ENCODE measurements at regions of chr12 and their contacts with region 1.

Region 1: DNA sequence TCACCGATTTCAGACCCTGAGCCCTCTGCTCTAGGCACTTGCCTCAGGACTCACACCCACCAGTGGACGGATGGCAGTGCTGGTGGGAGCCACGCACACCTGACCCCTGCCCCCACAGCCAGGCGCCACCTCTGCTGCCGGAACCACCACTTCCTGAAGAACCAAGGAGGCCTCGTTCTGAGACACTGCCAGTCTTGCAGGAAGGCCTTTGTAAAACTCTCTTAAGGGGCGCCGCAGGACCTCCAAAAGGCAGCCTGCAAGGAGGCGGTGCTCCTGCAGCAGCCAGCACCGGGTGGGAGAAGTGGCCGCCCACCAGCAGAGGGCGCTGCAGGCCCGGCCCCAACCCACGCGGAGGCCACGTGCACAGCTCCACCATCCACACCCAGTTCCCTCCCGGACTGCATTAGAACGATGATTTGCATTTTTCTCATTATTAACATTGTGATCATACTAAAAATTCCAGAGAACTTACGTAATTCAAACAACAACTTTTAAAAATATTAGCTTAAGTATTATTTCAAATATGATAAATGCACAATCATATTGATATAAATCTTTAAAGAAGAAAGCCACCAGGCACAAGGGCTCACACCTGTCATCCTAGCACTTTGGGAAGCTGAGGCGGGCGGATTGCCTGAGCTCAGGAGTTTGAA is 12.8 kb downstream of the STX2 start:
- DNase-seq: peak; percentile 67 to 96
- H3K4me3 ChIP-seq: no peak overlapping the region
- H3K27ac ChIP-seq: no peak overlapping the region
- H3K4me1 ChIP-seq: peaks cover 0 to 16% (median 12%) of the 10 kb centered on the region in 4 experiments; a peak in 6 of 7 replicates
- H3K27me3 ChIP-seq: no peaks in the 10 kb centered on the region
- CTCF ChIP-seq: peak; percentile 95 to 99 (median 96)
- EP300 ChIP-seq: no peak
- POLR2A ChIP-seq: no peak
- RAD21 ChIP-seq: peak; percentile 83 to 85

Region 2: GRCh38 chr12:130661486-130662255 is 164.6 kb before region 1 on chr12:
- CTCF ChIA-PET with region 1: no interaction called
- POLR2A ChIA-PET with region 1: no interaction called
- DNase-seq: no peak
- H3K4me3 ChIP-seq: no peak overlapping the region
- H3K27ac ChIP-seq: no peak overlapping the region
- H3K4me1 ChIP-seq: no peaks in the 10 kb centered on the region; a peak in 1 of 7 replicates
- H3K27me3 ChIP-seq: no peaks in the 10 kb centered on the region; a peak in 1 of 7 replicates
- CTCF ChIP-seq: peak in 2 of 3 experiments; percentile 26 to 31; a peak in 3 of 4 replicates
- EP300 ChIP-seq: no peak
- POLR2A ChIP-seq: no peak
- RAD21 ChIP-seq: peak; percentile 42 to 51; a peak in 3 of 4 replicates

Region 3: DNA sequence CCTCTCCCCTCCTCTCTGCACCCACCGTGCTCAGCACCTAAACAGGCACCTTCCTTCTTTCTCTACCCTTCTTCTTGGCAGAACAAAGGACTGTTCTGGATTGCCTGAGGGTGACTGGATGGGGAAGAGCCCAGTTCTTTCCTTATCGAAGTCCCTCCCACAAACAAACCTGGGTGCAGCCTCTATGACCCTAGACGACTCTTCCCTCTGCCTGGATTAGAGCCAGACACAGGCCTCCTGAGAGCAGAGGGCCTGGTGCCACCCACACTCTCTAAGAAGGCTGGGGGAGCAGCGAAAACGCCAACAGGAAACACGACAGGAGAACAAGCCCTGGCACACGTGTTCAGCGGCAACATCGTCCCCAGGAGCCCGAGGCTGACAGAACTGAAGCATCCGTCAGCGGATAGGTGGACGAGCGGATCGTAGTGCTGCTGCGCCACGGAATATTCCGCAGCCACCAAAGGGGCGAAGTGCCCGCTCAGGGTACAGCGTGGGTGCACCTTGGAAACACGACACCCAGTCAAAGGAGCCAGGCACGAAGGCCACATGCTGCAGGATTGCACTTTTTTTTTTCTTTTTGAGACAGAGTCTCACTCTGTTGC is 148.2 kb before region 1 on chr12:
- CTCF ChIA-PET with region 1: no interaction called
- POLR2A ChIA-PET with region 1: no interaction called
- DNase-seq: no peak
- H3K4me3 ChIP-seq: no peak overlapping the region
- H3K27ac ChIP-seq: no peak overlapping the region
- H3K4me1 ChIP-seq: no peaks in the 10 kb centered on the region
- H3K27me3 ChIP-seq: no peaks in the 10 kb centered on the region; a peak in 1 of 7 replicates
- CTCF ChIP-seq: no peak
- EP300 ChIP-seq: no peak
- POLR2A ChIP-seq: no peak
- RAD21 ChIP-seq: no peak

Region 4: DNA sequence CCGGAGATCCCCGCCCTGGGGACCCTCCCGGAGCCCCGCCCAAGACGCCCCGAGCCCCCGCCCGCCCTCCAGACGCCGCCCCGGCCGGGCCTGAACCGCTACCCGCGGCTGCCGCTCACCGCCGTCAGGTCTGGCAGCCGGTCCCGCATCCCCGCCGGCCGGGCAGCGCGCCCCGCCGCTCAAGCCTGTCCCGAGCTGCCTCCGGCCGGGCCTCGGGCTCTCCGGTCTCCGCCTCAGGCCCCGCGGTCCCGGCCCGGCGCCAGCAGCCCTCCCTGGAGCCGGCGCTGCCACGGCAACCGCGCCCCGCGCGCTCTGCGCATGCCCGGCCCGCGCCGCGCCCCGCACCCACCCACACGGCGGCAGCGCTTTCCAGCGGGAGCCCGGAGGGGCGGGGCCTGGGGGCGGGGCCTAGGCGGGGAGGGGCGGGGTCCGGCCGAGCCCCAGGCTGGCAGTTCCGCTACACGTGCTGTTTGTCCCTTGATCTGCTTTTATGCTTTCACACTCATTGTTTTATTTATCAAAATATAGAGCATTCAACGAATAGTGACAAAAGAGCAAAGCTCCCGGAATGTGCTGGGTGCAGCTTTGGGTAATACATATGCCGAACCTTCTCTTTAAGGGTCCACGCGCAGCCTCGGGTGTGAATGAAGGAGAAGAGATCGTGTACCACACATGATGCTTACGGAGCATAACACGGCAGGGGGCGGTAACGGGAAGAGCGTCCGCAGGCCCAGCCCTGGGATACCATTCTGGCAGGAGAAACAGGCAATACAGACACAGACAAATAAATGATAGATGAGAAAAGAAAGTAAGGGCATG is 12.9 kb after region 1 on chr12 and contains the start of gene STX2:
- CTCF ChIA-PET with region 1: interaction called, 70 read pairs
- POLR2A ChIA-PET with region 1: interaction called, 10 read pairs
- DNase-seq: peak in 1 of 2 experiments; percentile 90
- H3K4me3 ChIP-seq: peak within 1 kb of the TSS; percentile 58 to 78 (median 63)
- H3K27ac ChIP-seq: no peak within 1 kb of the TSS
- H3K4me1 ChIP-seq: peaks cover 6 to 14% (median 9%) of the 10 kb centered on the region in 4 experiments; a peak in 6 of 7 replicates
- H3K27me3 ChIP-seq: peaks cover 0 to 15% (median 7%) of the 10 kb centered on the region in 4 experiments; a peak in 5 of 7 replicates
- CTCF ChIP-seq: peak in 2 of 3 experiments; percentile 11 to 25; a peak in 2 of 4 replicates
- EP300 ChIP-seq: no peak
- POLR2A ChIP-seq: no peak
- RAD21 ChIP-seq: 0 out of 4 replicates have a peak, but pooled peaks of 1 of the 2 experiments have one; percentile 3
- total RNA-seq, gene STX2: 22.0 and 26.3 TPM in 2 replicates

Region 5: DNA sequence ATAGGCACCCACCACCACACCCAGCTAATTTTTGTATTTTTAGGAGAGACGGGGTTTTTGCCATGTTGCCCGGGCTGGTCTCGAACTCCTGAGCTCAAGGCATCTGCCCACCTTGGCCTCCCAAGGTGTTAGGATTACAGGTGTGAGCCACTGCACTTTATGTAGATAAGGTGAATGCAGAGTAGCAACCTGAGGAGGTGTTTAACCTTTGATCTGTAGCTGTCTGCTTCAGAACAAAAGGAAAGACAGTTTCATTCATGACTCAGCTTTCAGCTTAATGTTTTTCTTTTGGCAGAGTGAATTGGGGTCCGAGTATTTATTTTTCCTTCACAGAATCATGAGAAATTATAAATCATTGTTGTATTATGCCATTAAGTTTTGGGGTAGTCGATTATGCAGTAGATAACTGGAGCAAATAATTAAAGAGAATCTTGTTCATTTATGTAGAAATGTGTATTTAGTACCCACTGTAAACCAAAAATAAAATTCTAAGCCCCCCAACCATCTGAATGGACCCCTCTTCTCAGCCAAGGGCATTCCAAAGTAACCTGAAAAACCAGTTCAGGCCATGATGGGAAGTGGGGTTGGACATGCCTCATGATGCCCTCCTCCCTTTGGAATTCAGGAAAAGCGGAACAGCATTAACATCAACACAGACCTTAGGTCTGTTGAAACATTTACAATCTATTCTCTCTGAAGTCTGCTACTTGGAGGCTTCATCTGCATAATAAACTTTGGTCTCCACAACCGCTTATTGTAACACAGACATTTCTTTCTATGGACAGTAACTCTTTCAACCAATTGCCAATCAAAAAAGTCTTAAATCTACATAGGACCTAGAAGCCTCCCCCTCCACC is 23.5 kb after region 1 on chr12:
- CTCF ChIA-PET with region 1: interaction called, 17 read pairs
- POLR2A ChIA-PET with region 1: interaction called, 9 read pairs
- DNase-seq: no peak
- H3K4me3 ChIP-seq: peak overlapping the region in 1 of 4 experiments; percentile 18; a peak in 2 of 8 replicates
- H3K27ac ChIP-seq: peak overlapping the region; percentile 44
- H3K4me1 ChIP-seq: peaks cover 9 to 13% (median 10%) of the 10 kb centered on the region in 4 experiments; a peak in 6 of 7 replicates
- H3K27me3 ChIP-seq: no peaks in the 10 kb centered on the region
- CTCF ChIP-seq: no peak
- EP300 ChIP-seq: peak in 1 of 2 experiments; percentile 22; a peak in 1 of 3 replicates
- POLR2A ChIP-seq: no peak
- RAD21 ChIP-seq: no peak

Region 6: GRCh38 chr12:130858084-130858483 is 31.8 kb after region 1 on chr12:
- CTCF ChIA-PET with region 1: interaction called, 33 read pairs
- POLR2A ChIA-PET with region 1: interaction called, 8 read pairs
- DNase-seq: no peak
- H3K4me3 ChIP-seq: no peak overlapping the region
- H3K27ac ChIP-seq: 0 out of 2 replicates have a peak overlapping the region, but pooled peaks have one; percentile 32
- H3K4me1 ChIP-seq: peaks cover 4 to 7% (median 6%) of the 10 kb centered on the region in 4 experiments; a peak in 5 of 7 replicates
- H3K27me3 ChIP-seq: no peaks in the 10 kb centered on the region
- CTCF ChIP-seq: peak; percentile 12 to 52 (median 38); a peak in 3 of 4 replicates
- EP300 ChIP-seq: no peak
- POLR2A ChIP-seq: no peak
- RAD21 ChIP-seq: peak; percentile 27 to 45

Region 7: DNA sequence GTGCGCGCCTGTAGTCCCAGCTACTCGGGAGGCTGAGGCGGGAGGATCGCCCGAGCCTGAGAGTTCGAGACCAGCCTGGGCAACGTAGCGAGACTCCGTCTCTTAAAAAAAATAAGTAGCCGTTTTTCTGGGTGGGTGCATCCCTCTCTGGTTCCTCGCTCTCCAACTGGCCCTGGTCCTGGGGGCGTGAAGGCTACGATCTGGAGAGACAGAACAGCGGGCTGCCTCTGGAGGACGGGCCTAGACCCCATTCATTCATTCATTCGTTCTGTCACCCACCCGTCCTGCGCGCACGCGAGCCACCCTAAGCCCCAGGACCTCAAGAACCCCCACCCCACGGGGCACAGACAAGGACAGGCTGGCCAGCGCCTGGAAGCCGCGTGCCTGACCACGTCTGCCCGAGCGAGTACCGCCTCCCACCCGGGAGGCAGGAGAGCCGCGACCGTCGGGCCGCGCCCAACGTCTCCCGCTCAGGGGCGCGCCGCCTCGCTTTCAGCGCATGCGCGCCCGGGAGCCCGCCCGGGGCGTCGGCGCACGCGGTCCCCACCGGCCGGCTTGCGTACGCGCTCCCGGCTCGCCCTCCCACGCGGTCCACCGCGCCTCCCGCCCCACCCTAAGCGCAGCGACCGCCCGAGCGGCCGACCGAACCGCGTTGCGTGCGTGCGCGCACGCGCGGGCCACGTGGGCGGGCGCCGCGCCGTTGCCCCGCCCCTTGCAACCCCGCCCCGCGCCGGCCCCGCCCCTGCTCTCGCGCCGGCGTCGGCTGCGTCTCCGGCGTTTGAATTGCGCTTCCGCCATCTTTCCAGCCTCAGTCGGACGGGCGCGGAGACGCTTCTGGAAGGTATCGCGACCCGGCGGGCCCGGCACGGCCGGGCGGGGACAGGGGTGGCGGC is 45.3 kb after region 1 on chr12 and contains the start of gene RAN:
- CTCF ChIA-PET with region 1: interaction called, 30 read pairs
- POLR2A ChIA-PET with region 1: interaction called, 14 read pairs
- DNase-seq: peak; percentile 71 to 87
- H3K4me3 ChIP-seq: peak within 1 kb of the TSS; percentile 84 to 98 (median 90)
- H3K27ac ChIP-seq: peak within 1 kb of the TSS; percentile 95
- H3K4me1 ChIP-seq: peaks cover 0 to 3% (median 3%) of the 10 kb centered on the region in 4 experiments; a peak in 4 of 7 replicates
- H3K27me3 ChIP-seq: no peaks in the 10 kb centered on the region
- CTCF ChIP-seq: no peak
- EP300 ChIP-seq: no peak
- POLR2A ChIP-seq: peak; percentile 69 to 90
- RAD21 ChIP-seq: no peak
- total RNA-seq, gene RAN: 2,056 and 2,064 TPM in 2 replicates